HCT116 (cell line): ENCODE measurements at regions of chr1 and their contacts with region 1.

Region 1: GRCh38 chr1:102726417-102726816 is 381.9 kb downstream of the COL11A1 start:
- DNase-seq: no peak
- ATAC-seq: no peak
- H3K4me3 ChIP-seq: no peak overlapping the region
- H3K27ac ChIP-seq: no peak overlapping the region
- H3K4me1 ChIP-seq: no peaks in the 10 kb centered on the region
- H3K27me3 ChIP-seq: no peaks in the 10 kb centered on the region
- CTCF ChIP-seq: no peak
- POLR2A ChIP-seq: no peak
- RAD21 ChIP-seq: no peak

Region 2: GRCh38 chr1:102676926-102677325 is 49.5 kb before region 1 on chr1:
- CTCF ChIA-PET with region 1: no interaction called
- POLR2A ChIA-PET with region 1: no interaction called
- RAD21 ChIA-PET with region 1: no interaction called
- intact Hi-C with region 1: loop called (anchors 5 kb)
- DNase-seq: no peak
- ATAC-seq: no peak
- H3K4me3 ChIP-seq: no peak overlapping the region
- H3K27ac ChIP-seq: no peak overlapping the region
- H3K4me1 ChIP-seq: no peaks in the 10 kb centered on the region
- H3K27me3 ChIP-seq: no peaks in the 10 kb centered on the region
- CTCF ChIP-seq: no peak
- POLR2A ChIP-seq: no peak
- RAD21 ChIP-seq: no peak

Region 3: DNA sequence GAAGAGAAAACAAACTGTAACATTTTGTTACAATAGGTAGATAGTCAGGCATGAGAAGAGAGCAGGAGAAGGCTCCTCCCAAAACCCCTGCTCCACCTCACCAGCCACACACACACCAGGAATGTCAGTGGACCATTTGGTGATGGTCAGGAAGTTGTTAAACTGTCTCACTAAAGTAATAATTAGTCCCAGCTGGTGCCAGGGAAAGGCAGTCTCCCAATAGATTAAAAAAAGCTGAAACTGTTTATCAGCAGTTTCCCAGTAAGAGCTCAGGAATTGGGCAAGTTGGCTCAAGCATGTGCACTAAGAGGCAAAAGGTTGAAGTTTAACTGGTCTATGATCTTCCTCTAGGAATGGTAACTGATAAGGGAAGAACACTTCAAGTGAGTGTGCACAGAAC is 132.3 kb after region 1 on chr1:
- CTCF ChIA-PET with region 1: no interaction called
- POLR2A ChIA-PET with region 1: no interaction called
- RAD21 ChIA-PET with region 1: no interaction called
- intact Hi-C with region 1: no loop called
- DNase-seq: no peak
- ATAC-seq: no peak
- H3K4me3 ChIP-seq: no peak overlapping the region
- H3K27ac ChIP-seq: no peak overlapping the region
- H3K4me1 ChIP-seq: no peaks in the 10 kb centered on the region
- H3K27me3 ChIP-seq: no peaks in the 10 kb centered on the region
- CTCF ChIP-seq: no peak
- POLR2A ChIP-seq: no peak
- RAD21 ChIP-seq: no peak

Region 4: GRCh38 chr1:103162360-103162759 is 435.9 kb after region 1 on chr1:
- CTCF ChIA-PET with region 1: no interaction called
- POLR2A ChIA-PET with region 1: no interaction called
- RAD21 ChIA-PET with region 1: no interaction called
- intact Hi-C with region 1: no loop called
- DNase-seq: no peak
- ATAC-seq: no peak
- H3K4me3 ChIP-seq: no peak overlapping the region
- H3K27ac ChIP-seq: no peak overlapping the region
- H3K4me1 ChIP-seq: no peaks in the 10 kb centered on the region
- H3K27me3 ChIP-seq: no peaks in the 10 kb centered on the region
- CTCF ChIP-seq: no peak
- POLR2A ChIP-seq: no peak
- RAD21 ChIP-seq: no peak